CD4-positive, alpha-beta T cell (primary cell): ENCODE measurements at regions of chr4 and their contacts with region 1.

Region 1: GRCh38 chr4:151760712-151761527 is at the start of gene GATB:
- DNase-seq: peak; percentile 85 to 97 (median 88)
- ATAC-seq: peak; percentile 97
- H3K4me3 ChIP-seq: peak within 1 kb of the TSS; percentile 85
- H3K4me3 Mint-ChIP-seq: peak within 1 kb of the TSS; percentile 96
- H3K27ac ChIP-seq: peak within 1 kb of the TSS; percentile 53 to 55
- H3K27ac Mint-ChIP-seq: peak within 1 kb of the TSS; percentile 86
- H3K4me1 ChIP-seq: peaks cover 12% of the 10 kb centered on the region
- H3K4me1 Mint-ChIP-seq: peaks cover 17% of the 10 kb centered on the region
- H3K27me3 ChIP-seq: no peaks in the 10 kb centered on the region
- H3K27me3 Mint-ChIP-seq: no peaks in the 10 kb centered on the region
- CTCF ChIP-seq: peak; percentile 60
- total RNA-seq, gene GATB: 3.6 to 5.8 TPM

Region 2: GRCh38 chr4:151099229-151099975 is 661.5 kb before region 1 on chr4 and contains the start of gene RPS3A:
- CTCF ChIA-PET with region 1: no interaction called
- POLR2A ChIA-PET with region 1: interaction called, 3 read pairs
- intact Hi-C with region 1: loop called in 1 of 2 experiments (anchors 5 kb)
- DNase-seq: peak; percentile 96 to 99 (median 98)
- ATAC-seq: peak; percentile 83
- H3K4me3 ChIP-seq: peak within 1 kb of the TSS; percentile 74
- H3K4me3 Mint-ChIP-seq: peak within 1 kb of the TSS; percentile 87
- H3K27ac ChIP-seq: peak within 1 kb of the TSS; percentile 82 to 97
- H3K27ac Mint-ChIP-seq: peak within 1 kb of the TSS; percentile 88
- H3K4me1 ChIP-seq: peaks cover 26% of the 10 kb centered on the region
- H3K4me1 Mint-ChIP-seq: peaks cover 36% of the 10 kb centered on the region
- H3K27me3 ChIP-seq: no peaks in the 10 kb centered on the region
- H3K27me3 Mint-ChIP-seq: no peaks in the 10 kb centered on the region
- CTCF ChIP-seq: peak; percentile 91
- total RNA-seq, gene RPS3A: 3,925 to 4,071 TPM

Region 3: DNA sequence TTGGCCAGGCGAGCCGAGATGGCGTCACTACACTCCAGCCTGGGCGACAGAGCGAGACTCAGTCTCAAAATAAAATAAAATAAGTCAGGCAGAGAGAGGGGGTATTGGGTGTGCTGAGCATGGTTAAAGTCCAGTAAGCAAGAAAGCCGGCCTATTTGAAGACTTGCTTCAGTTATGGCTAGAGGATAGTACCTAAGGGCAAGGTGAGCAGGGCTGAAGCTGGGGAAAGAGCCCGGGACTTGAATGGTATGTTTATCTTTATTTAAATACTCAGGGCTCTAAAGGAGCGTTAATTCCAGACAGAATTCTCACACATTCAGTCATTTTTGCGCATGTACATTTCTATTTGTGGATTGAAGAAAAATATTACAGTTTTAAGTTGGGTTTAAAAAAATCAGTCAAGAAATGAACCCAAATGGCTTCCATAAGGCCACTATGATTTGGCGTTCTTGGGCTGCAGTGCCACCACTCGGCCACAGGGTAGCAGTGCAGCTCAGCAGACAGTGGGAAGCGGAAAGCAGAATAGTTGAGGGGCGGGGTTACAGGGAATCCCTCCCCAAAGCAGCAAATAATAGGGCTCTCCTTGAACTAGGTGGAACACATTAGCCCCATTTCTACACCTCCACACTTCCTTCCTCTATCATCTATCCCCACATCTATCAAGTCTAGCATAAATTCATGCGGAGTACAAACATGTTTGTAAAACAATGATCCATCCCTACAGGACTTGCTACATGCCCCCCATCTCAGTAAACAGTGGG is 398.3 kb before region 1 on chr4:
- CTCF ChIA-PET with region 1: no interaction called
- POLR2A ChIA-PET with region 1: no interaction called
- intact Hi-C with region 1: loop called (anchors 10 kb)
- DNase-seq: peak; percentile 58 to 90 (median 68)
- ATAC-seq: peak; percentile 100
- H3K4me3 ChIP-seq: no peak overlapping the region
- H3K4me3 Mint-ChIP-seq: no peak overlapping the region
- H3K27ac ChIP-seq: no peak overlapping the region
- H3K27ac Mint-ChIP-seq: no peak overlapping the region
- H3K4me1 ChIP-seq: no peaks in the 10 kb centered on the region
- H3K4me1 Mint-ChIP-seq: no peaks in the 10 kb centered on the region
- H3K27me3 ChIP-seq: no peaks in the 10 kb centered on the region
- H3K27me3 Mint-ChIP-seq: peaks cover 13% of the 10 kb centered on the region
- CTCF ChIP-seq: peak; percentile 88

Region 4: DNA sequence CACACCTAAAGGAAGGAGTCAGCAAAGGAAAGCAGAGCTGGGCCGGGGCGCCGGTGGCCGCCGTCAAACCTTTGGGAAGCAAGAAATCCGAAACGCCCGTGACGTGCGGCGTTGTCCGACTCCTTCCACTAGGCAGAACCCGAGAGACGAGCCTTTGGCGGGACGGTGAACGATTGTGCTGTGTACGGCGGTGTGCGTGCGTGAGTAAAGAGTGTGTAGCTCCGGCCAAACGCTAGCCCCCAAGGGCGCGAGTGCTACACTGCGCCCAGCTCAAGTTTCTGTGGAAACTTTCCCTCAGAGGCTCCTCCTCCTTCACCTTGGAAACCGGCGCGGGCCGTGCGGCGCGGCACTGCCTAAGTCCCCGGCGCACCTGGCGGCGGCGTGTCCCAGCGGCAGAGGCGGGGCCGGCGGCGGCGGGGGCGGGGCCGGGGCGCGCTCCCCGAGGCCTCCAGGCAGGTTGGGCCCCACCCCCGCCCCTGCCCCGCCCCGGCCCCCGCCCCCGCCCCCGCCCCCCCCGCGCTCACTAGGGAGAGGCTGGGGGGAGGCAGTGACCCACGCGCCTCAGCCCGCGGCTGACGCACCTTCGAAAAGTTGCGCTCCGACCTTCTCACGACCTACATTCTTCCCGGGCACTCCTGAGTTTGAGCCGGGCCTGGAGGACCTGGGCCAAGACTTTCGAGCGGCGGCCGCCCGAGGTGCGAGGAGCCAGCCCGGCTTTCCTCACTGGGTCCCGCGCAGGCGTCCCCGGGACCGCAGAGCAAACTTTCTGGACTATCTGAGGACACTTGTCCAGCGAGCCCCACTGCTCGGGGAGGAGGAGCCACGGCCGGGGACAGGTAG is 352.1 kb before region 1 on chr4 and contains the start of gene FHIP1A:
- CTCF ChIA-PET with region 1: no interaction called
- POLR2A ChIA-PET with region 1: no interaction called
- intact Hi-C with region 1: loop called in 1 of 2 experiments (anchors 2 kb)
- DNase-seq: peak; percentile 73 to 93 (median 85)
- ATAC-seq: peak; percentile 93
- H3K4me3 ChIP-seq: peak within 1 kb of the TSS; percentile 68
- H3K4me3 Mint-ChIP-seq: peak within 1 kb of the TSS; percentile 96
- H3K27ac ChIP-seq: no peak within 1 kb of the TSS
- H3K27ac Mint-ChIP-seq: peak within 1 kb of the TSS; percentile 83
- H3K4me1 ChIP-seq: peaks cover 27% of the 10 kb centered on the region
- H3K4me1 Mint-ChIP-seq: peaks cover 27% of the 10 kb centered on the region
- H3K27me3 ChIP-seq: peaks cover 0 to 4% of the 10 kb centered on the region in 2 experiments
- H3K27me3 Mint-ChIP-seq: peaks cover 4% of the 10 kb centered on the region
- CTCF ChIP-seq: no peak
- total RNA-seq, gene FHIP1A: 2.4 to 3.2 TPM

Region 5: GRCh38 chr4:152094970-152095700 is 334.2 kb after region 1 on chr4:
- CTCF ChIA-PET with region 1: no interaction called
- POLR2A ChIA-PET with region 1: interaction called, 5 read pairs
- intact Hi-C with region 1: loop called (anchors 2 to 5 kb)
- DNase-seq: peak in 1 of 14 experiments; percentile 50
- ATAC-seq: no peak
- H3K4me3 ChIP-seq: no peak overlapping the region
- H3K4me3 Mint-ChIP-seq: no peak overlapping the region
- H3K27ac ChIP-seq: peak overlapping the region in 1 of 2 donors; percentile 61
- H3K27ac Mint-ChIP-seq: peak overlapping the region; percentile 95
- H3K4me1 ChIP-seq: peaks cover 78% of the 10 kb centered on the region
- H3K4me1 Mint-ChIP-seq: peaks cover 69% of the 10 kb centered on the region
- H3K27me3 ChIP-seq: no peaks in the 10 kb centered on the region
- H3K27me3 Mint-ChIP-seq: no peaks in the 10 kb centered on the region
- CTCF ChIP-seq: no peak

Region 6: GRCh38 chr4:152369902-152370295 is 609.0 kb after region 1 on chr4:
- CTCF ChIA-PET with region 1: no interaction called
- POLR2A ChIA-PET with region 1: no interaction called
- intact Hi-C with region 1: loop called in 1 of 2 experiments (anchors 5 kb)
- DNase-seq: peak in 3 of 14 experiments; percentile 14 to 22 (median 15)
- ATAC-seq: no peak
- H3K4me3 ChIP-seq: no peak overlapping the region
- H3K4me3 Mint-ChIP-seq: no peak overlapping the region
- H3K27ac ChIP-seq: no peak overlapping the region
- H3K27ac Mint-ChIP-seq: no peak overlapping the region
- H3K4me1 ChIP-seq: no peaks in the 10 kb centered on the region
- H3K4me1 Mint-ChIP-seq: peaks cover 13% of the 10 kb centered on the region
- H3K27me3 ChIP-seq: no peaks in the 10 kb centered on the region
- H3K27me3 Mint-ChIP-seq: no peaks in the 10 kb centered on the region
- CTCF ChIP-seq: peak; percentile 68

Region 7: GRCh38 chr4:152385551-152385950 is 624.6 kb after region 1 on chr4:
- CTCF ChIA-PET with region 1: no interaction called
- POLR2A ChIA-PET with region 1: no interaction called
- intact Hi-C with region 1: loop called in 1 of 2 experiments (anchors 5 kb)
- DNase-seq: peak in 4 of 14 experiments; percentile 10 to 28 (median 19)
- ATAC-seq: peak; percentile 53
- H3K4me3 ChIP-seq: no peak overlapping the region
- H3K4me3 Mint-ChIP-seq: no peak overlapping the region
- H3K27ac ChIP-seq: no peak overlapping the region
- H3K27ac Mint-ChIP-seq: peak overlapping the region; percentile 71
- H3K4me1 ChIP-seq: no peaks in the 10 kb centered on the region
- H3K4me1 Mint-ChIP-seq: peaks cover 37% of the 10 kb centered on the region
- H3K27me3 ChIP-seq: no peaks in the 10 kb centered on the region
- H3K27me3 Mint-ChIP-seq: no peaks in the 10 kb centered on the region
- CTCF ChIP-seq: peak; percentile 72